Activated naive CD4-positive, alpha-beta T cell treated with anti-CD3 and anti-CD28 coated beads for 36 hours (primary cell): ENCODE measurements at regions of chr7 and their contacts with region 1.

Region 1: DNA sequence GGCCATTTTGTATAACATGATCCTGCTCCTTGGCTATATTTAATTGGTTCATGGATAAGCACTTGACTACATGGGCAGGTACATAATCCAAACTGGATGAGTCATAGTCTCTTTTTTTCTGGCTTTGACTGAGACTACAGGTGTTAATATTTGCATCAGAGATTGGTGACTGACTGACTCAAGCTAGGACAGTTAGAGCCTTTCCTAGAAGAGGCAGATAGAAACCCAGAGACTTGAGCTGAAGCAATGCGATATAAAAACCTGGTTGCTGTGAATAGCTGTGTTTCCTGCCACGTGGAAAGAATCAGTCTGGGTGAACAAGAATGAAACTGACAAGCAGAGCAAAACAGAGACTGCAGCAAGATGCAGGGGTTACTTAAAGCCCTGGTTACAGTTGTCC is 81.0 kb downstream of the SAMD9 start:
- DNase-seq: peak; percentile 74
- H3K4me3 Mint-ChIP-seq: no peak overlapping the region
- H3K27ac Mint-ChIP-seq: peak overlapping the region; percentile 59
- H3K4me1 Mint-ChIP-seq: peaks cover 22% of the 10 kb centered on the region
- H3K27me3 Mint-ChIP-seq: no peaks in the 10 kb centered on the region

Region 2: DNA sequence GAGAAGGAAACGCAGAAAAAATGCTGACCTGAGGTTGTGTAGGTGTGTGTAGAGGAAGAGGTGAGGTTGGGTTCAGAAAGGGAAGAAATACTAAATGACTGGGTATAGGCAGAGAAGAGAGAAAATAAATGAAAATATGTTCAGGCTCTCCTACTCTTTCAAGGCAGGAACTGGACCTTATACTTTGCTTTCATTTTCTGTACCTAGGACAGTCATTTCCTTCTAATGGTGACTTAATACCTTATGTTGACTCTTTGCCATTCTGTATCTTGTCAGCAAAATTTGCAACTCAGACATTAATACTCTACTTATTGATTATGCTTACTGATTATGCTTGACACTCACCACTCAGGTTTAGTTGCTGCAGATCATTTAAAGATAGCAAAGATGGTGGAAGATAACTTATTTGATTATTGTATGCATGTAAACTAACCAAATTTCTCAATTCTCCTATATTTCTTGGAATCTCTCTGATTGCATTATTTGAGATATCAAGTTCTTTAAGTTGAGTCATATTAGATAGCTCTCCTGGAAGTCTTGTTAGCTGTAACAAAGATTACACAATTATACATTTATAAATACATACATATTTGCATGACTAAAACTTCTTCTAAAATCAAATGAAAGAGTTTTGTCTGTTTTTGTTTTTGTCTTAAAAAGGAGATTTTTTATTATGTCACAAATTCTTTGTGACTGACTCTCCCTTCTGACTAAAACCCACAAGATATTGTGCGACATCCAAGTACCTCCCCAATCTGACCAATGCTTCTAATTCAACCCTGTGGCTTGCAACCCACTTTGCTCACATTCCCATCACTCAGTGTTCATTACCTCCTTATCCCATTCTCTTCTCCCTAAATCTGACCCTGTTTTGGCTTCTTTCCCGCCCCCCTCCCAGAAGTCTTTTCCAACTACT is 877.9 kb before region 1 on chr7:
- CTCF ChIA-PET with region 1: no interaction called
- intact Hi-C with region 1: no loop called
- DNase-seq: no peak
- H3K4me3 Mint-ChIP-seq: no peak overlapping the region
- H3K27ac Mint-ChIP-seq: no peak overlapping the region
- H3K4me1 Mint-ChIP-seq: no peaks in the 10 kb centered on the region
- H3K27me3 Mint-ChIP-seq: peaks cover 2% of the 10 kb centered on the region

Region 3: GRCh38 chr7:92633211-92633906 is 403.4 kb before region 1 on chr7:
- CTCF ChIA-PET with region 1: no interaction called
- intact Hi-C with region 1: loop called (anchors 1 kb)
- DNase-seq: peak; percentile 49
- H3K4me3 Mint-ChIP-seq: no peak overlapping the region
- H3K27ac Mint-ChIP-seq: peak overlapping the region; percentile 92
- H3K4me1 Mint-ChIP-seq: peaks cover 84% of the 10 kb centered on the region
- H3K27me3 Mint-ChIP-seq: no peaks in the 10 kb centered on the region

Region 4: DNA sequence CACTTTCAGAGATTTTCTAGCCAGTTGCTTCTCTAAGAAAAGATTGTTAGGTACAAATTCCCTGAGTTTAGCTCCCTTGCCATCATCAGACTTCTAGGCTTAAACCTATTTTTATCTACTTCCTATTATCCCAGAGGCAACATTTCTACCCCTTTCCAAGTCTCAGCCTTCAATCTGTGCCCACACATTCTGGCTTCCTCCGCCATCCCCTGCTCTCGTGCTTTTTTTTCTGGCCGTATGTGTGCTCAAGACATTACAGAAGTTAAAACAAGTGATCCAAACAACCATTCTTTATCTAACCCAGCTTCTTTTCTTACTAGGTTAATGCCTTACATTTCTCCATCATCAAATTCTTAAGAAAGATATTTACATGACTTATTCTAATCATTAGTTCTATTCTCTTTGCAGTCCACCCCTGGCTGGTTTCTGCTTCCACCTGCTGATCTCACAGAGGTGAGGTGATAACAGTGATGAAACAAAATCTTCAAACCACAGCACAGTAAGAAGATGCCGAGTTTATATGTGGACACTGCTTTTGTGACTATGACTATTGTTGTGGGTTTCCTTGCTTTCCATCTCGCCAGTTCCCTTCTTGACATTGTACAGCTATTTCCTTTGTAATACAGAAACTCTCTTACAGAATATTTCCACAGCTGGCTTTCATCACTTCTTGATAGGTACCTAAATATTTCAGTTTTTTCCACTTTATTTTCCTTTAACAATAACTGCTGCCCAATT is 182.1 kb before region 1 on chr7:
- CTCF ChIA-PET with region 1: no interaction called
- intact Hi-C with region 1: loop called (anchors 1 kb)
- DNase-seq: peak; percentile 39
- H3K4me3 Mint-ChIP-seq: no peak overlapping the region
- H3K27ac Mint-ChIP-seq: peak overlapping the region; percentile 46
- H3K4me1 Mint-ChIP-seq: peaks cover 16% of the 10 kb centered on the region
- H3K27me3 Mint-ChIP-seq: peaks cover 6% of the 10 kb centered on the region

Region 5: GRCh38 chr7:93025389-93025788 is 11.4 kb before region 1 on chr7:
- CTCF ChIA-PET with region 1: interaction called, 5 read pairs
- intact Hi-C with region 1: loop called (anchors 1 kb)
- DNase-seq: peak; percentile 17
- H3K4me3 Mint-ChIP-seq: no peak overlapping the region
- H3K27ac Mint-ChIP-seq: peak overlapping the region; percentile 50
- H3K4me1 Mint-ChIP-seq: peaks cover 35% of the 10 kb centered on the region
- H3K27me3 Mint-ChIP-seq: peaks cover 14% of the 10 kb centered on the region